T-cell (primary cell): ENCODE measurements at regions of chr4 and their contacts with region 1.

Region 1: DNA sequence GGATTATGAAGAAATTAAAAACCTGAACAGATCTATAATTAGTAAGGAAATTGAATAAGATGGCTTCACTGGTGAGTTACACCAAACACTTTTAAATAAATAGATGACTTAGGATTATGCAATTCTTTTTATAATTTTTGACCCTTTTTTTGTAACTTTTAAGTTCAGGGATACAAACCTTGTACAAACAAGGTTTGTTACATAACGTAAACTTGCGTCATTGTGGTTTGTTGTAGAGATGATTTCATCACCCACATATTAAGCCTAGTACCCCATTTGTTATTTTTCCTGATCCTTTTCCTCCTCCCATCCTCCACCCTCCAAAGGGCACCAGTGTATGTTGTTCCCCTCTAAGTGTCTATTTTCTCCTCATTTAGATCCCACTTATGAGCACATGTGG is 75.7 kb downstream of the CPEB2 start:
- DNase-seq: no peak
- ATAC-seq: no peak
- H3K4me3 ChIP-seq: no peak overlapping the region
- H3K4me3 Mint-ChIP-seq: no peak overlapping the region
- H3K27ac ChIP-seq: no peak overlapping the region
- H3K27ac Mint-ChIP-seq: no peak overlapping the region
- H3K4me1 ChIP-seq: no peaks in the 10 kb centered on the region
- H3K4me1 Mint-ChIP-seq: no peaks in the 10 kb centered on the region
- H3K27me3 ChIP-seq: no peaks in the 10 kb centered on the region
- H3K27me3 Mint-ChIP-seq: no peaks in the 10 kb centered on the region

Region 2: DNA sequence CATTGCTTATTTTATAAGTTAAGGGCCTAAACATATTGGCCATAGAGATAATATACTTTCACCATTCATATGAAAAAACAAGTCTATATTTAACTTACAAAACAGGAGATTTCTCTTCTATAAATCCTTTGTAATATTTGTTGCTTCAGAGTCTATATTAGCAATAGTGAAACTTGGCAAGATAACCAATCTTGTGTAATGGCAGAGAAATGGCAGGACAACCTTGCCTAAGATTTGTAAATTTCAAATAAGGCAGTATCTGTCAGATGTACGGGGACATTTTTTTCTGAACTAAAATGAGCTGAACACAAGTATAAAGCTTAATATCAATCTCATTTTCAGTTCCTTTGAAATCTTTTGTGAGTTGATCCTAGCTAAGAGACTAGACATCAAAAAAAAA is 93.5 kb before region 1 on chr4:
- CTCF ChIA-PET with region 1: no interaction called
- POLR2A ChIA-PET with region 1: no interaction called
- DNase-seq: no peak
- ATAC-seq: no peak
- H3K4me3 ChIP-seq: no peak overlapping the region
- H3K4me3 Mint-ChIP-seq: no peak overlapping the region
- H3K27ac ChIP-seq: no peak overlapping the region
- H3K27ac Mint-ChIP-seq: no peak overlapping the region
- H3K4me1 ChIP-seq: no peaks in the 10 kb centered on the region
- H3K4me1 Mint-ChIP-seq: no peaks in the 10 kb centered on the region
- H3K27me3 ChIP-seq: no peaks in the 10 kb centered on the region
- H3K27me3 Mint-ChIP-seq: peaks cover 5 to 9% of the 10 kb centered on the region in 2 donors

Region 3: DNA sequence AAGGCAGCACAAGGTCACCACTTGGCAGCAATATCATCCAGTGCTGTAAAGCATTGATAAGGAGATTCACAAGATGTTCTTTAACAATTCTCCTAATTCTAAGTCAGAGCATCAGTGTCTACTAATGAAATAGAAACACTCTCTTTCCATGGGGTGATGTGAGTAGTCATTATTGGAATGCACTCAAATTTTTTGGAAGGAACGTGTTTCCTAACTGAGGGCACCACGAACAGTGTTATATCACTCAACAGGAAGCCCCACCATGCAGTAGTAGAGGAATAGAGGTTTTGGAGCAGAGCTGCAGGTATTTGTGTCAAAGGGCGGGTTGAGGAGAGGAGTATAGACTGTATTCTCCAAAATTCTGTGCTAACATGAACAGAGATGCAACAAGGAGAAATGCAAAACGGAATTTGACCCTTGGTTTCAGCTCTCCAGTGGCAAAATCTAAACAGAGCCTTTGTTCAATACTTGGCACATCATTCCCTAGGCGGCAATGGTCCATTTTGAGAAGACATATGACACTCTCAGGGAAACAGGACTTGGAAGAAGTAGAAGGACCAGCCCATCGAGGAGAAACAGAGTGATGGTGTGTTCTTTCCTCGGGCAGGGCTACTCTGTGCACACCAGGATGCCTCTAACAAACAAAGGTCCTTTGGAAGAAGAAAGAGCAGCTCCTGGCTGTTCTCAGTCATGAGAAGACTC is 23.2 kb after region 1 on chr4:
- CTCF ChIA-PET with region 1: no interaction called
- POLR2A ChIA-PET with region 1: interaction called in 1 of 2 experiments, 13 read pairs
- DNase-seq: no peak
- ATAC-seq: no peak
- H3K4me3 ChIP-seq: no peak overlapping the region
- H3K4me3 Mint-ChIP-seq: no peak overlapping the region
- H3K27ac ChIP-seq: no peak overlapping the region
- H3K27ac Mint-ChIP-seq: no peak overlapping the region
- H3K4me1 ChIP-seq: no peaks in the 10 kb centered on the region
- H3K4me1 Mint-ChIP-seq: no peaks in the 10 kb centered on the region
- H3K27me3 ChIP-seq: no peaks in the 10 kb centered on the region
- H3K27me3 Mint-ChIP-seq: peaks cover 0 to 18% of the 10 kb centered on the region in 2 donors